ENCODE measurements at regions of chr4 and their contacts with region 1.

Region 1: DNA sequence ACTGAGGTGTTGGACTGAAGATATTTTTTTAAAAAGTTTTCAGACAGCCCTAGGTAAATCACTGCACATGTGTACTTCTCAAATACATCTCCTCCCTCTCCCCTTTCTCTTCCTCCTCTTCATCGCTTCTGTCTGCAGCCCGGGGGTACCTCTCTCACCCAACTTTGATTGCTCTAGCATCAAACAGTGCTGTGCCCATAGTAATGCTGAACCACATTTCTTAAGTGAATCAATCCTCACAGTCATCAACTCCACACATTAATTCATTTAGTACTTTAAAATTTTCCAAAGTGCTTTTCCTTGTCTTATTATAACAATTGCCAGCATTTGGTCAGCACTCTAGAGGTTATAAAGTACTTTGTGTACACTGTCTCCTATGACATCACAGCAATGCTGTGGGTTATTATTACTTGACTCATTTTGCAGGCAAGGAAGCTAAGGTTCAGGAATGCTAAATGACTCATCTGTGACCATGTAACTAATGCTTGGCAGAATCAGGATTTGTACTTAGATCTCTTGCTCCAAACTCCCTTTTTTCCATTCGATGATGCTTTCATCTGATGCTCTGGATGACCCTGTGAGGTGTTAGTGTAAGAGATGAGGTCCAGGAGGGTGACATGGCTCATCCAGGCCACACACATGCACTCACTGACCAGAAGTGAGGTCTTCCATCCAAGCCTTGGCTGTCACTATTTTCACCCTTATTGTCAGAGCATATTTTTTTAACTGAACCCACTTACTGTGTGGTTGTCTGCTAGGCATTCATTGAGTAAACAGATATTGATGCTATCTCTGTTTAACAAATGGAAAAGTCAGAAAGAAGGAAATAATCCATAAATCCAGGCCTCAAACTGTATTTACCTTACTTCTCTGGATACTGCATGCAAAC is 58.8 kb downstream of the RHOH start:
- DNase-seq: peak; percentile 97
- ATAC-seq: peak; percentile 71
- H3K4me3 ChIP-seq: peak overlapping the region in 1 of 2 experiments; percentile 37; a peak in 2 of 4 replicates
- H3K27ac ChIP-seq: peak overlapping the region; percentile 71
- H3K4me1 ChIP-seq: peaks cover 32 to 79% of the 10 kb centered on the region in 2 experiments
- H3K27me3 ChIP-seq: no peaks in the 10 kb centered on the region
- CTCF ChIP-seq: no peak
- POLR2A ChIP-seq: no peak
- RAD21 ChIP-seq: peak; percentile 30; the same call in 1 of the 2 replicates

Region 2: GRCh38 chr4:40283968-40284367 is 28.3 kb after region 1 on chr4:
- CTCF ChIA-PET with region 1: no interaction called
- POLR2A ChIA-PET with region 1: no interaction called
- RAD21 ChIA-PET with region 1: no interaction called
- intact Hi-C with region 1: loop called (anchors 1 kb)
- DNase-seq: peak; percentile 91
- ATAC-seq: peak; percentile 95
- H3K4me3 ChIP-seq: no peak overlapping the region; a peak in 1 of 4 replicates
- H3K27ac ChIP-seq: no peak overlapping the region
- H3K4me1 ChIP-seq: peaks cover 4 to 21% of the 10 kb centered on the region in 2 experiments
- H3K27me3 ChIP-seq: no peaks in the 10 kb centered on the region
- CTCF ChIP-seq: peak in 2 of 3 experiments; percentile 35 to 43; a peak in 4 of 6 replicates
- POLR2A ChIP-seq: no peak
- RAD21 ChIP-seq: peak; percentile 29